ENCODE measurements at regions of chr6 and their contacts with region 1.

Region 1: GRCh38 chr6:41545703-41546474 is at the start of gene FOXP4:
- DNase-seq: peak; percentile 88 to 93
- H3K4me3 ChIP-seq: peak within 1 kb of the TSS; percentile 72 to 94
- H3K27ac ChIP-seq: peak within 1 kb of the TSS; percentile 85 to 90
- H3K4me1 ChIP-seq: peaks cover 3 to 17% of the 10 kb centered on the region in 2 donors
- H3K27me3 ChIP-seq: no peaks in the 10 kb centered on the region
- CTCF ChIP-seq: no peak
- POLR2A ChIP-seq: peak in 1 of 2 donors; percentile 49
- total RNA-seq, gene FOXP4: 3.8 to 50.1 (median 9.4) TPM

Region 2: GRCh38 chr6:41505122-41506049 is 40.5 kb before region 1 on chr6:
- intact Hi-C with region 1: loop called (anchors 5 kb)
- DNase-seq: peak; percentile 90 to 93
- H3K4me3 ChIP-seq: peak overlapping the region; percentile 21 to 46
- H3K27ac ChIP-seq: peak overlapping the region; percentile 83 to 98
- H3K4me1 ChIP-seq: peaks cover 7 to 12% of the 10 kb centered on the region in 2 donors
- H3K27me3 ChIP-seq: no peaks in the 10 kb centered on the region
- CTCF ChIP-seq: peak in 1 of 4 experiments; percentile 41
- POLR2A ChIP-seq: no peak